Cardiac septum (tissue), 1 donor: ENCODE measurements at regions of chr9 and their contacts with region 1.

Region 1: GRCh38 chr9:113591001-113591898 is 127.7 kb downstream of the RGS3 start:
- DNase-seq: peak; percentile 88

Region 2: GRCh38 chr9:113247640-113248039 is 343.6 kb before region 1 on chr9:
- intact Hi-C with region 1: no loop called
- DNase-seq: no peak

Region 3: GRCh38 chr9:113340017-113340699 is 251.1 kb before region 1 on chr9 and contains the start of gene WDR31:
- intact Hi-C with region 1: loop called (anchors 5 kb)
- DNase-seq: peak; percentile 96
- total RNA-seq, gene WDR31: 10.9 TPM

Region 4: GRCh38 chr9:113446323-113446740 is 144.9 kb before region 1 on chr9:
- intact Hi-C with region 1: loop called (anchors 2 kb)
- DNase-seq: no peak

Region 5: DNA sequence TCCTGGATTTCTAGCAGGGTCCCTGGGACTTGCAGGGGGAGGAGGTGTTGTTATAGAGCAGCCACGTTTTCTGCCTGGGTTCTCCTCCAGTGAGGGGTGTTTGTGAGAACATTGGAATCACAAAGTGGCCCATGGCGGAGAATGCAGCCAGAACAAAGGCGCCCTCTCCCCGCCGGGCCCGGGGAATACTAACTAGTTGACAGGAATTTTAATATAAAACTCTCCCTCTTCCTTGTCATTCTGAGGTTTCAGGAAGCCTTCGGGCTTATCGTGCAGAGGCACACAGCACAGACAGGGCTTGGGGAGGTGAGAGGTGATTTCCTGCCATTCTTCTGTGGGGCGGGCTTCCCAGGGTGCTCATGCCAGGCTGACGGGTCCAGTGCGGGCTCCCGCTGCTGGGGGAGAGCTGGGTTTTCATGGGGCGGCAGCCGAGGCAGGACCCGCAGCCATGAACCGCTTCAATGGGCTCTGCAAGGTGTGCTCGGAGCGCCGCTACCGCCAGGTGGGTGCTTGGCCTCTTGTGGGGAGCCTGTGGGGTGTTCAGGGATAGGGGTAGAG is 90.0 kb before region 1 on chr9:
- intact Hi-C with region 1: loop called (anchors 5 kb)
- DNase-seq: no peak

Region 6: DNA sequence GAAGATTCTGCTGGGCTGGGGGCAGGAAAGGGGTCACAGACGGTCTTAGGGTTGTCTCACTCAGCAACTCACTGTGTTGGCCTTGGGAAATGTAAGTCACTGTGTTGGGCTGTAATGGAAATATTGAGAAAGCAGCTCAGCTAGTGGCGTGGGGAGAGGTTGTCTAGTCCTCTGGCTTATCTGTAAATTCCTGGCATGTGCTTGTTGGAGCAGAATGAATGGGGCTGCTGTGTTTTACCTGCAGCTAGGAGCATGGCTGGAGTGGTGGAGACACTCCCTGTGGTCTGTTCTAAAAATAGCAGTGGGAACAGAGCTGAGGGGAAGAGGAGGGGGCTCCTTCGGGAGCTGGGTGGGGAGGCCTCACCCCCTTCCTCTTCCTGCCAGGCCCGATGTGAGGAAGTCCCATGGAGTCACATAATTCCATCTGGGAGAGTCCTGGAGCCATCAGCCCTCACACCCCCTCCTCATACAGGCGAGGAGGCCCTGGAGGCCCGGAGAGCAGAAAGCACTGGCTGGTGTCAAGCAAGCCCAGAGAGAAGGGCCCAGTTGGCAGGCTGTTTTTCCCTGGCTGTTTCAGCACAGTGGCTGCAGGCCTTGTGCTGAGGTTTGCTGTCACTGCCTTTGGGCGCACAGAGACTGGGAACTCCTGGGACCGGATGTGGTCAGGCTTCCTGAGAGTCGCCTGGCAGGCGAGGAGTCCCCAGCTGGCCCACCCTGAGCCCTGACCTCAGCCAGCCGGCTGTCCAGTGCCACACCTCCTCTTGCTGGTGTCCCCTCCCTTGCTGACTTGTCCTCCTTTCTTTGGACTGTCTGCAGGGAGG is 42.8 kb before region 1 on chr9:
- intact Hi-C with region 1: loop called (anchors 5 kb)
- DNase-seq: peak; percentile 88

Region 7: DNA sequence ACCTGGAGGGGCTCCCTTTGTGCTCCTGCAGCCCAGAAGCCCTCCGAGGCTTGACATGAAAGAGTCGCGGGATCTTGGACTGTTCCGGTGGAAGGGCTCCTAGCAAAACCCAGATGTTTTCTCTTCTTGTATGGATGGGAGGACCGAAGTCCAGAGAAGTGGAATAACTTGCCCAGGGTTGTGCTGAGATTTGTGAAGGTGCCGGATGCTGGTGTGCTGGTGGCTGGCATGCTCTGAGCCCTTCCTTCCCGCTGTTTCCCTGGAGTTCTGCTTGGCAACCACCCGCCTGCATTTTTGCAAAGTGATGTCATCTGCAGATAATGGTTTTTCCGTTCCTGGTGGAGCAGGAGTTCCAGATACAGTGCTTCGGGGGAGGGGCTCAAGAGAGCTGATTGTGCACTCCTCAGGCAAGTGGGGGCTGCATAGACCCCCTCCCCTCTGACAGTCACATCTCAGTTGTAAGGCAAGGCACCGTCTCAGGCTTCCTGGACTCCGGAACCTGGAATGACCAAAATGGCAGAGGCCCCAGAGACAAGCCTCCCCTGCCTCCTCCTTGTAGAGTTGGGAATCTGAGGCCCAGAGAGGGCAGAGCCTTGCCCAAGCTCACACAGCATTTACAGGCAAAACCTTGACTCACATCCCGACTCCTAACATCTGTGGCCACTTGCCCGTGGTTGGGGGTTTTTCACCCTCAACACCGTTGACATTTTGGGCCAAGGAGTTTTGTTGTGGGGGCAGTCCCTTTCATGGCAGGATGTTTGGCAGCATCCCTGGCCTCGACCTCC is 29.3 kb after region 1 on chr9:
- intact Hi-C with region 1: loop called (anchors 2 kb)
- DNase-seq: no peak

Region 8: DNA sequence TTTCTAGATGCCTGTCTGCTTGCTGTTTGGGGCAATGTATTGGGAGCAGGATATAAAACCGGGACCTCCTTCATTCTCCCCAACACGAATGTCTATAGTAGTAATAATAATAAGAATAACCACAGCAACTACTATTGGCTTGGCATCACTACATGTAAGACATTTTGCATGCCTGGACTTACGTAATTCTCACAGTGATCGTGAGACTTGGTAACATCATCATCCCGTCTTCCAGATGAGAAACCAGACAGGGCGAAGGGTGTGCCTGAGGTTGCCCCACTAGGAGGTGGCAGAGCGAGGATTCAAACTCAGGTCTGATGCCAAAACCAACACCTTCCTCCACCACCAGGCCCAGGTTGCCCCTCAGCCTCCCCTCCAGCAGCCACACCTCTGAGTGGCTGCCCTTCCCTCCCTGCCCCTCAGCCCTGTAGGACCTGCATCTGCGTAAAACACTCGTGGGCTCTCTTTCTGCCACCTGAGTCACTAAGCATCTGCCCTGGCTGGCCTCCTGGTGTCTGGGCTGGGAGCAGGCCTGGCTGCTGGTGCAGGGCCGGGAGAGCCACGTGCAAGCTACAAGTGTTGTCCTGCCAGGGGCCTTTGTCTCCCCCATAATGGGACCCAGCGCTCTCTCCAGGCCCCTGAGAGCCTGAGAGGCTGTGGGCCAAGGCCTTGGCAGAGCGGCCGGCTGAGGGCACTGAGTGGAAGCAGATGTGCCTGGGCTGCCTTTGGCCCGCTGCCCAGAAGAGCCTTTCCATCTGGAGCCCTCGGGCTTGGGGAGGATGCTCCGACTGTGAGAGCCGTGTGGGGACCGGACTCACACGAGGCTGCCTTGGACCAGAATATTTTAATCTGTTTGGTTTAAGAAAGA is 57.6 kb after region 1 on chr9:
- intact Hi-C with region 1: no loop called
- DNase-seq: peak; percentile 88